Heart left ventricle (tissue), 16 donors: ENCODE measurements at regions of chr18 and their contacts with region 1.

Region 1: DNA sequence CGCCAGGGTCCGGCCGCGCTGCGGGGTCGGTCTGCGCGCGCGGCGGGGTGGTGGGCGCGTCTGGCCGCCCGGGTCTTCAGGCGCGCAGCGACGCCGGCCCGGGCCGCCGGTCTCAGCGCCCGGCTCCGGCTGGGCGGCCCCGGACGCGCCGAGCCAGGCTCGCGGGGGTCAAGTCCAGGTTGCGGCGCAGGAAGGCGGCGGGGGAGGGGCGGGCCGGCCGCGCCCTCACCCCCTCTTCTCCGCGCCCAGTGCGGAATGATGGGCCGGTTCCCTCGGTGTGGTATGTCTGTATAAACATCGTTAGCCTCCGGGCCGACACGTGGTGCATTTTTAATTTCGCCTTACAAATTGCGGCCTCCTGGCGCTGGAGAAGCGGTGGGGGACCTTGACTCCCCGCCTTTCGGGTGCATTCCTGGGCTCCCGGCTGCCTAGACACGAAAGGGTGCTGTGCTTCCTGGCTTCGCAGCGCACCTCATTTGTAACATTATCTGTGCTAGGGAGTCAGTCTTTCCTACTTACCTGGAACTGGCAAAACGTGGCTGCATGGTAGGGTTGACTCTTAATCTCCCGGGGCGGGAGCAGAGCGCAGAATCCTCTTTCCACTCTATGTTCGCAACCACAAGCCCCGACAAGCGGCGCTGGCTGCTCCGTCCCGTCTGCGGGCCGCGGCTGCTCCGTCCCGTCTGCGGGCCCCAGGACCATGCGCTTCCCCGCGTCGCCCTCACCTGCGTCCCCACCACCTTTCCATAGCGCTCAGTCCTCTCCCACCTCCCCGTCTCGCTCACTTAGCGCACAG is 69.0 kb downstream of the CTAGE1 start:
- DNase-seq: peak; percentile 78 to 87 (median 81)
- ATAC-seq: peak; percentile 54 to 73 (median 70)
- H3K4me3 ChIP-seq: peak overlapping the region; percentile 30 to 65 (median 60)
- H3K27ac ChIP-seq: peak overlapping the region; percentile 84 to 98 (median 92)
- H3K4me1 ChIP-seq: peaks cover 0 to 56% (median 39%) of the 10 kb centered on the region in 12 donors
- H3K27me3 ChIP-seq: peaks cover 0 to 27% (median 0%) of the 10 kb centered on the region in 9 donors
- CTCF ChIP-seq: peak in 1 of 12 donors; percentile 7
- POLR2A ChIP-seq: no peak

Region 2: DNA sequence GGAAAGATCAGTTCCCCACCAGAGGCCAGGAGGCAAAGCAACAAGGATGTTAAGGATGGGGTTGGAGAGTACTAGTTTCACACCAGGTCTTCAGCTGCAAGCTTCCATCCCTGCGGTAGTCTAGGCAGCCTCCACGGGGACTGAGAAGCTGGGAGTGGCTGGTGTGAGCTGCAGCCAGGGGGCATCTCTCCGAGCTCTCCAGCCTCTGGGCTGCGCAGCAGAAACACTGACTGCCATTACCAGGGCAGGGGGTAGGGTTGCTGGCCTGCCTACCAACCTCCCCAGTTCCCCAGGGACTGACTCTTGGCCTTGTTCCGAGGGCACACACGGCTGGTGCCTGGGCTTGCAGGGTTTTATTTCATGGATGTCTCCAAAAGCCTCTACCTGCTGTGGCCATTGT is 163.4 kb before region 1 on chr18:
- intact Hi-C with region 1: loop called in 4 of 10 experiments (anchors 5 to 10 kb)
- DNase-seq: peak in 2 of 5 donors; percentile 44 to 70
- ATAC-seq: peak; percentile 35 to 71 (median 50)
- H3K4me3 ChIP-seq: peak overlapping the region in 2 of 12 donors; percentile 1 to 12
- H3K27ac ChIP-seq: peak overlapping the region; percentile 65 to 100 (median 83)
- H3K4me1 ChIP-seq: peaks cover 0 to 100% (median 69%) of the 10 kb centered on the region in 12 donors
- H3K27me3 ChIP-seq: no peaks in the 10 kb centered on the region
- CTCF ChIP-seq: peak in 8 of 12 donors; percentile 13 to 52 (median 34)
- POLR2A ChIP-seq: no peak

Region 3: GRCh38 chr18:22194151-22194598 is 154.5 kb before region 1 on chr18:
- intact Hi-C with region 1: loop called in 4 of 10 experiments (anchors 5 to 10 kb)
- DNase-seq: peak in 3 of 5 donors; percentile 51 to 60 (median 55)
- ATAC-seq: peak; percentile 18 to 68 (median 50)
- H3K4me3 ChIP-seq: peak overlapping the region in 8 of 12 donors; percentile 3 to 40 (median 8)
- H3K27ac ChIP-seq: peak overlapping the region; percentile 11 to 100 (median 81)
- H3K4me1 ChIP-seq: peaks cover 8 to 98% (median 70%) of the 10 kb centered on the region in 12 donors
- H3K27me3 ChIP-seq: no peaks in the 10 kb centered on the region
- CTCF ChIP-seq: no peak
- POLR2A ChIP-seq: no peak

Region 4: GRCh38 chr18:22200611-22201225 is 148.0 kb before region 1 on chr18:
- intact Hi-C with region 1: loop called in 2 of 10 experiments (anchors 5 to 10 kb)
- DNase-seq: peak in 1 of 5 donors; percentile 58
- ATAC-seq: peak; percentile 18 to 69 (median 54)
- H3K4me3 ChIP-seq: peak overlapping the region in 2 of 12 donors; percentile 15 to 35
- H3K27ac ChIP-seq: peak overlapping the region in 11 of 12 donors; percentile 17 to 87 (median 67)
- H3K4me1 ChIP-seq: peaks cover 2 to 93% (median 68%) of the 10 kb centered on the region in 12 donors
- H3K27me3 ChIP-seq: no peaks in the 10 kb centered on the region
- CTCF ChIP-seq: peak in 1 of 12 donors; percentile 12
- POLR2A ChIP-seq: no peak

Region 5: GRCh38 chr18:22282311-22283112 is 66.2 kb before region 1 on chr18:
- intact Hi-C with region 1: loop called in 7 of 10 experiments (anchors 2 to 10 kb)
- DNase-seq: no peak
- ATAC-seq: peak in 2 of 4 donors; percentile 21 to 33
- H3K4me3 ChIP-seq: no peak overlapping the region
- H3K27ac ChIP-seq: peak overlapping the region in 1 of 12 donors; percentile 66
- H3K4me1 ChIP-seq: peaks cover 0 to 50% (median 15%) of the 10 kb centered on the region in 12 donors
- H3K27me3 ChIP-seq: no peaks in the 10 kb centered on the region
- CTCF ChIP-seq: no peak
- POLR2A ChIP-seq: no peak

Region 6: DNA sequence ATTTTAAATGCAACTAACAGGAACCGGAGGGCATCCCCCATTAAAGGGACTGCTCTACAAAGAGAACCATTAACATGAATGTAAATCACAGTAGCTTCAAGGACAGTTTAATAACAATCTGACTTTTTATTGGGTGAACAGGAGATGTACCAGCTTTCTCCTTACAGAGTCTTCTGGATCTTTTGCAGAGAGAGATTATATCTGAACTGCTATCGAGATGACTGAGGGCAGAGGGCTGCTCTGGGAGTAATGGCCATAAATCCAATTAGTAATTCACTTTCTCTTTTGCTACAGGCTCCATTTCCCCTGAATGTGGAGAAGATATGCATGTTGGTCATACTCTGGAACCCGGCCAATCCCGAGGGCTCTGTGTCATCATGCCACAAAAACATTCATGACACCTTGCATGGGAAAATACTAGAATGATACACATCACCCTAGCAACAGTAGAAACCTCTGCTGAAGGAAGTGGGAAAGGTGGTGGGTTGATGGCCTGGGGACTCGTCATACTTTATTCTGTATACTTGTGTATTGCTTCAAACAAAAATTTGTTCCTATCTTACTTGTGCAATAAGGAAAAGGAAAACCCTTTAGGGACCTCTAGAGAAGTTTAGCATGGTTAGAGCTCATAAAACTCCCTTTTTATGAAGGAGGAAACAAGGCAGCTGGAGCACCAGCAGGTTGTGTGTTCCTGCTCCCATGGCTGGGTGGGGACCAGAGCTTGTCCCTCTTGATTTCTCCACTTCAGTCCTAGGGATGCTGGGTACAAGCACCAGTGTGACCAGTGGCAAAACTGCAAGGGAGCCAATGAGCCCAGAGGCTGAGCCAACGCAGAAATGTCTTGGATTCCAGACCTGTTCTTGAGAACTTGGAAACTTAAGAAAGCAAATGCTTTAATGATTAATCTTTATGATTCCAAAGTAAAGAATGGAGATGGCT is 43.0 kb after region 1 on chr18:
- intact Hi-C with region 1: loop called in 1 of 10 experiments (anchors 10 kb)
- DNase-seq: peak in 1 of 5 donors; percentile 9
- ATAC-seq: peak in 2 of 4 donors; percentile 15 to 16
- H3K4me3 ChIP-seq: no peak overlapping the region
- H3K27ac ChIP-seq: no peak overlapping the region
- H3K4me1 ChIP-seq: peaks cover 0 to 22% (median 7%) of the 10 kb centered on the region in 12 donors
- H3K27me3 ChIP-seq: no peaks in the 10 kb centered on the region
- CTCF ChIP-seq: no peak
- POLR2A ChIP-seq: no peak

Region 7: GRCh38 chr18:22465859-22466457 is 117.2 kb after region 1 on chr18:
- intact Hi-C with region 1: loop called in 1 of 10 experiments (anchors 2 kb)
- DNase-seq: peak in 4 of 5 donors; percentile 51 to 71 (median 60)
- ATAC-seq: peak; percentile 92 to 94 (median 94)
- H3K4me3 ChIP-seq: peak overlapping the region in 1 of 12 donors; percentile 1
- H3K27ac ChIP-seq: peak overlapping the region; percentile 65 to 96 (median 86)
- H3K4me1 ChIP-seq: peaks cover 0 to 49% (median 34%) of the 10 kb centered on the region in 12 donors
- H3K27me3 ChIP-seq: no peaks in the 10 kb centered on the region
- CTCF ChIP-seq: no peak
- POLR2A ChIP-seq: peak in 1 of 2 donors; percentile 6